IMR-90 (cell line): ENCODE measurements at regions of chr2 and their contacts with region 1.

Region 1: GRCh38 chr2:233711312-233712008 is 1.2 kb upstream of the UGT1A5 start:
- DNase-seq: peak; percentile 73
- ATAC-seq: peak; percentile 95
- H3K4me3 ChIP-seq: no peak overlapping the region
- H3K27ac ChIP-seq: no peak overlapping the region
- H3K4me1 ChIP-seq: peaks cover 4% of the 10 kb centered on the region
- H3K27me3 ChIP-seq: no peaks in the 10 kb centered on the region
- CTCF ChIP-seq: peak; percentile 86
- POLR2A ChIP-seq: no peak
- RAD21 ChIP-seq: peak; percentile 86

Region 2: DNA sequence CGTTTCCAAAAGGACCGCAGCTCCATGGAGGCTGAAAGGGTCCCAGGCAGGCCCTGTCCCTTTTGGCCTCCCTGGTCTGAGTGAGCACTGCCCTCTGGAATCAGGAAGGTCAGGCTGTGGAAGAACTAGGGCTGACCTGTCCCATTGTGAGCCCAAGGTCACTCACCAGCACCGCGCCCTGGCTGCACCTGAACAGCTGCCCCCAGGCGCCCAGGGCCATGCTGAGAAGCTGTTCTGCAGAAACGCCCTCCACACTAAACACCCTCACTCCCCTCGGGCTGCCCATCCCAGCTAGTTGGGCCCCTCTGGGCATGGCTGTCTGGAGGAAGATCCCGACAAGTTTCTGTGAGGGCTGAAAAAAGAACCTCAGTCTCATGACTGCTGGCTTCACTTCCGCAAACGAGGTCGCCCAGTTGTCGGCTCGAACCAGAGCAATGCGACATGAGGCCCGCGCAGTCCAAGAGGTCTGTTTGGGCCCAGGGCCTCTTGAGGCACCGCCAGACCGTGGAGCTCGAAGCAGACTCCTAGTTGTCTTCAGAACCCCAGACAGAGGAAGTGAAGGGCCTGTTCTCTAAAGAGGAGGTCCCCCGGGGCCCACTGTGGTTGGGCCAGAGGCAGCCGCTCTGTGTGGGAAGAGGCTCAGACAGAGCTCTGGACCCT is 586.9 kb before region 1 on chr2:
- CTCF ChIA-PET with region 1: no interaction called
- POLR2A ChIA-PET with region 1: no interaction called
- dilution Hi-C with region 1: no loop called
- in situ Hi-C with region 1: no loop called
- intact Hi-C with region 1: no loop called
- DNase-seq: no peak
- ATAC-seq: no peak
- H3K4me3 ChIP-seq: no peak overlapping the region
- H3K27ac ChIP-seq: no peak overlapping the region
- H3K4me1 ChIP-seq: no peaks in the 10 kb centered on the region
- H3K27me3 ChIP-seq: peaks cover 7% of the 10 kb centered on the region; the same call in 1 of the 2 replicates
- CTCF ChIP-seq: no peak
- POLR2A ChIP-seq: no peak
- RAD21 ChIP-seq: no peak

Region 3: GRCh38 chr2:233280114-233280693 is 431.3 kb before region 1 on chr2:
- CTCF ChIA-PET with region 1: no interaction called
- POLR2A ChIA-PET with region 1: no interaction called
- dilution Hi-C with region 1: no loop called
- in situ Hi-C with region 1: no loop called
- intact Hi-C with region 1: loop called (anchors 5 kb)
- DNase-seq: no peak
- ATAC-seq: peak; percentile 76
- H3K4me3 ChIP-seq: no peak overlapping the region
- H3K27ac ChIP-seq: no peak overlapping the region
- H3K4me1 ChIP-seq: peaks cover 2% of the 10 kb centered on the region; the same call in 1 of the 2 replicates
- H3K27me3 ChIP-seq: no peaks in the 10 kb centered on the region
- CTCF ChIP-seq: no peak
- POLR2A ChIP-seq: no peak
- RAD21 ChIP-seq: no peak

Region 4: GRCh38 chr2:233449081-233449901 is 262.2 kb before region 1 on chr2:
- CTCF ChIA-PET with region 1: interaction called, 3 read pairs
- POLR2A ChIA-PET with region 1: no interaction called
- dilution Hi-C with region 1: no loop called
- in situ Hi-C with region 1: loop called (anchors 5 kb)
- intact Hi-C with region 1: loop called (anchors 1 kb)
- DNase-seq: peak; percentile 48
- ATAC-seq: peak; percentile 94
- H3K4me3 ChIP-seq: no peak overlapping the region
- H3K27ac ChIP-seq: no peak overlapping the region
- H3K4me1 ChIP-seq: no peaks in the 10 kb centered on the region
- H3K27me3 ChIP-seq: no peaks in the 10 kb centered on the region
- CTCF ChIP-seq: peak; percentile 82
- POLR2A ChIP-seq: no peak
- RAD21 ChIP-seq: peak; percentile 79

Region 5: DNA sequence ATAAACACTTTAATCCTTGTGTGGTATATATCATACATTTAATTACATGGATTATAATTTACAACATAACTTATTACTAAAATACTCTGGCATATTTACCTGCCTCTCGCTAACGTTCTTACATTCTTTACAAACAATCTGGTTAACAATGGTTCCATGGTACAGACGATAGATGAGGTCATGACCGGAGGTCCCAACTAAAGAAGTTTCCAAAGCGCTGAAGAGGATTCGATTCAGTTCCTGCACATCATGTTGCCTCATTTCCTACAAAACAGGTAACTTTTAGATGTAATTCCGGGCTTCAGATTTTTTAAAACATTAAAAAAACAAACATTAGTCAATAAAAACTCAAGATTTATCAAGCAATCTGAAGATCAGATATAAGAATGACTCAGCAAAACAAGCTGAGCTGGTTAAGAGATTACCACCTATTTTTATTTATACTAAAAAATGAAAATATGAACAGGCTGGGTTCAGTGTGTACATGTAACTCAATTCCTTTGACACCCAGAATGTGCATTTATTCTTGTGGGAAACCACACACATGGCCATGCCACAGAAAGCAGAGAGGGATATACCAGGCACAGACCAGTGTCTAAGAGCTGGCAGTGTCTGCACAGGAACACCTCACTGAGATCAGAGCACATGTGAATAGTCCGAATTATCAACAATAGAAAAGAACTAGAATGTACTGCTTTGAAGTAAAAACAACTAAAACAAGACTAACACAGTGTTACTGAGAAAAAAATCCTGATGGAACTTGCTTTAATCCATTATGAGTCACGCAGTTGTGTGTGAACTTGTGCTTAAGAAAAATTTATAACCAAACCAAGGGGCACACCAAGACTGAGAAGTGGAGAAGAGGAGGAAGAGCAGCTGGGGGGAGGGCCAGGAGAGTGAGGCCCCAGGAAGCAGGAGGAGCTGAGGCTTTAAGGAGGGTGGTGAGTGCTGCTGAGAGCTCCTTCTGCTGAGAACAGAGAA is 154.4 kb before region 1 on chr2:
- CTCF ChIA-PET with region 1: interaction called, 3 read pairs
- POLR2A ChIA-PET with region 1: no interaction called
- dilution Hi-C with region 1: no loop called
- in situ Hi-C with region 1: no loop called
- intact Hi-C with region 1: loop called (anchors 5 kb)
- DNase-seq: peak; percentile 79
- ATAC-seq: peak; percentile 94
- H3K4me3 ChIP-seq: no peak overlapping the region
- H3K27ac ChIP-seq: peak overlapping the region; percentile 83; the same call in 1 of the 2 replicates
- H3K4me1 ChIP-seq: peaks cover 12% of the 10 kb centered on the region
- H3K27me3 ChIP-seq: no peaks in the 10 kb centered on the region
- CTCF ChIP-seq: no peak
- POLR2A ChIP-seq: no peak
- RAD21 ChIP-seq: no peak

Region 6: DNA sequence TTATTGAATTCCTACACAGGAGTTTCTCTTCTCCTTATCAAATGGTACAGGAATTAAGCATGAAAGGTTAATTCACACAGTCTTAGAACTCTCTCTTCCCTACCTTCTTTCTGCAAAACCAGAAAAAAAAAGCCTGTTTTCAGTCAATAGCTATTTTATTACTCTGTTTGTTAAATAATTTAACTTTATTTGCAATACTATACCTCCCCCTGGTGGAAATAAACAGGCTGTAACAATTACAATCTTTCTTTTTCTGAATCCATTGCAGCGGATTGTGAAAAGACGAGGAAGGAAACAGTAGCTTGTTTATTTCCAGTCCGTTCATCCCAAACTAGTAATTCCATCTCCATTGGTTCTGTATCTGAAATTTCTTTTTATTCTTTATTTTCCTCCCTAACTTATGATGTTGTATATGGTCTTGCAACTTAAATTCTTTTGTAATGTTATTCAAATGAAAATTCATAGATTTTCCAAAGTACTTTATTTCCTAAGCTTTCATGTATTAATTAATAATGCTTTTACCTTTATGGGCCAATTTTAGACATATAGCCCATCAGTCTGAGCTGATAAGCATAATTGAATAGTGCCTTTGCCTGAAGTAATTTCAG is 1405.5 kb after region 1 on chr2:
- CTCF ChIA-PET with region 1: no interaction called
- POLR2A ChIA-PET with region 1: no interaction called
- dilution Hi-C with region 1: no loop called
- in situ Hi-C with region 1: no loop called
- intact Hi-C with region 1: loop called (anchors 5 kb)
- DNase-seq: peak; percentile 48
- ATAC-seq: peak; percentile 69
- H3K4me3 ChIP-seq: no peak overlapping the region
- H3K27ac ChIP-seq: no peak overlapping the region
- H3K4me1 ChIP-seq: no peaks in the 10 kb centered on the region
- H3K27me3 ChIP-seq: peaks cover 4% of the 10 kb centered on the region
- CTCF ChIP-seq: peak; percentile 76
- POLR2A ChIP-seq: no peak
- RAD21 ChIP-seq: peak; percentile 74